GM10248 (cell line): ENCODE measurements at regions of chr18 and their contacts with region 1.

Region 1: GRCh38 chr18:26383454-26384270 is 157.4 kb downstream of the TAF4B start:
- DNase-seq: peak; percentile 47
- CTCF ChIP-seq: peak; percentile 75

Region 2: GRCh38 chr18:26362021-26362420 is 21.6 kb before region 1 on chr18:
- CTCF ChIA-PET with region 1: interaction called, 94 read pairs
- POLR2A ChIA-PET with region 1: no interaction called
- DNase-seq: no peak
- CTCF ChIP-seq: no peak

Region 3: GRCh38 chr18:26397019-26397418 is 13.4 kb after region 1 on chr18:
- CTCF ChIA-PET with region 1: interaction called, 15 read pairs
- POLR2A ChIA-PET with region 1: no interaction called
- DNase-seq: peak; percentile 37
- CTCF ChIP-seq: no peak

Region 4: DNA sequence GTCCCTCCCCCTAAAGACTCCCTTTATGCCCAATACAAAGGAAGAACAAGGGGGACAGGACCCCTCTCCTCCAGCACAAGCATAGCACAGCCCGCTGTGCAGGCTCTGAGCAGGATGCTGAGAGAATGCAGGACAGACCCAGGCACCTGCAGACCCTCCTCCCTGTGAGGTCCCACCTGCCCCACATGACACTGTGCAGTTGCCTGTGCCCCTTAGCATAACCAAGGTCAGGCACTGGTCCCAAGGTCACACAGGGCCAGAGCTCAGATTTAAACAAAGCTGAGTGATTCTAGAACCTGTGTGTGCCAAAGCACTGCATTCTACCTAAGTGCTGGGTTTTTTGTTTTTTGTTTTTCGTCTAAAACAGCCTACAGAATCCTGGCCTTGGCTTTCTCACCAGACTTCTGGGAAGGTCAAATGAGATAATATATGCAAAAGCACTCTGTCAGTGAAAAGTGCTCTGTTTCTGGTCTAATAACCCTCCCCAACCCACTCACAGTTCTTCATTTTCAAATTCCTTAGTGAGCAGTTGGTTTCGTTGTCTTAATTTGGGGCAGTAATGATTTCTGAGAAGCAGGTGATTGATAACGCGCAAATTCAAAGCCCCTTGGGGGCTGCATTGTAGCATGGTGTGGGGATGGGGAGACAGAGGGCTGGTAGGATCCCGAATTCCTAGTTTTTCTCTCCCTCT is 39.0 kb after region 1 on chr18:
- CTCF ChIA-PET with region 1: interaction called, 25 read pairs
- POLR2A ChIA-PET with region 1: no interaction called
- DNase-seq: peak; percentile 60
- CTCF ChIP-seq: no peak

Region 5: GRCh38 chr18:26504831-26505230 is 121.2 kb after region 1 on chr18:
- CTCF ChIA-PET with region 1: interaction called, 10 read pairs
- POLR2A ChIA-PET with region 1: no interaction called
- DNase-seq: no peak
- CTCF ChIP-seq: no peak

Region 6: GRCh38 chr18:27081701-27082100 is 698.0 kb after region 1 on chr18:
- CTCF ChIA-PET with region 1: no interaction called
- POLR2A ChIA-PET with region 1: no interaction called
- DNase-seq: no peak
- CTCF ChIP-seq: no peak